Breast epithelium (tissue), 4 donors: ENCODE measurements at regions of chr9 and their contacts with region 1.

Region 1: GRCh38 chr9:75001719-75002422 is 26.2 kb downstream of the CARNMT1 start:
- DNase-seq: no peak
- H3K4me3 ChIP-seq: no peak overlapping the region
- H3K27ac ChIP-seq: no peak overlapping the region
- H3K4me1 ChIP-seq: no peaks in the 10 kb centered on the region
- H3K27me3 ChIP-seq: no peaks in the 10 kb centered on the region
- CTCF ChIP-seq: peak; percentile 70 to 90 (median 72)
- POLR2A ChIP-seq: no peak

Region 2: DNA sequence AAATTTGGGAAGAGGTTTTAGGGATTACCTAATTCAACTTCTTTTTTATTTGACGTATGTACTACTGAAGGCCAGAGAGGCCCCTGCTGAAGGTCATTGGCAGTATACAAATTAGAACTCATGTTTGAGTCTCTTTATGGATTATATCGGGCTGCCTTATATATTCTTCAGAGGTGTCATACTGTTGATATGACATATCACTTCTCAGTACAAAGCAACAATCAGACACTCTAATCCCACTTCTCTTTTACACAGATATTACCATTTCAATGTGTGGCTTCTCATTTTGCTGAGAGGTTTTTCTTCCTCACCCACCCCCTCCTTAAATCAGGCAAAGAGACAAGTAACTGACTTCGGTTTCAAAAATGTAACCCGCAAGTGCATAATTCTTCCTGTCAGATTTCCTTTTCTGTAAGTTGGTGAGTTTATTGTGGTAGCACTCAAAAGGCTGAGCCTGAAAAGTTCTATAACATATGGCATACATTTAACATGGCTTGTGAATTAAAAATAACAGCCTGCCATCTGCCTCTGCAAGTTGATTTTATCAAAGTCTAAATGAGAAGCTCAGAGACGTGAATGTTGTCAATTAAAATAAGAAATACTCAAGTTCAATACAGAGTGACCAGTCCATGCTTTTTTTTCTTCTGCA is 668.4 kb before region 1 on chr9:
- intact Hi-C with region 1: loop called (anchors 10 kb)
- DNase-seq: no peak
- H3K4me3 ChIP-seq: no peak overlapping the region
- H3K27ac ChIP-seq: no peak overlapping the region
- H3K4me1 ChIP-seq: no peaks in the 10 kb centered on the region
- H3K27me3 ChIP-seq: no peaks in the 10 kb centered on the region
- CTCF ChIP-seq: no peak
- POLR2A ChIP-seq: no peak

Region 3: DNA sequence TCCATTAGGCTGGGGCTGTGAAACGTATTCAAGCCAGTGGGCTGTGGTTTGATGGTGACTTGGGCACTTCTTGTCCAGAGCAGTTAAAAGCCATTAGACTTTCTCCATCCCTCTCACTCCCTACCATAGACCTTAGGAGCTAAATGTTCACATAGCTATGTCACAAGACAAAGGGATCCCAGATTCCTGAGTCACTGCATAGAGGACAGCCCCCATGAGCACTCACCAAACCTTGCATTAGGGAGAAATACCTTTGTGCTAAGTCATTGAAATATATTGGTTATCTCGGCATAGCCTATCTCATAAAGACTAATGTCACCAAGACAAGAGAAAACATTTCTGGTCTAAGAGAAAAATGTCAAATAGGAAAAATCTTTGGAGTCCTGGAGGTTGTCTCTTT is 218.5 kb before region 1 on chr9:
- intact Hi-C with region 1: loop called (anchors 5 kb)
- DNase-seq: no peak
- H3K4me3 ChIP-seq: no peak overlapping the region
- H3K27ac ChIP-seq: no peak overlapping the region
- H3K4me1 ChIP-seq: no peaks in the 10 kb centered on the region
- H3K27me3 ChIP-seq: no peaks in the 10 kb centered on the region
- CTCF ChIP-seq: no peak
- POLR2A ChIP-seq: no peak

Region 4: DNA sequence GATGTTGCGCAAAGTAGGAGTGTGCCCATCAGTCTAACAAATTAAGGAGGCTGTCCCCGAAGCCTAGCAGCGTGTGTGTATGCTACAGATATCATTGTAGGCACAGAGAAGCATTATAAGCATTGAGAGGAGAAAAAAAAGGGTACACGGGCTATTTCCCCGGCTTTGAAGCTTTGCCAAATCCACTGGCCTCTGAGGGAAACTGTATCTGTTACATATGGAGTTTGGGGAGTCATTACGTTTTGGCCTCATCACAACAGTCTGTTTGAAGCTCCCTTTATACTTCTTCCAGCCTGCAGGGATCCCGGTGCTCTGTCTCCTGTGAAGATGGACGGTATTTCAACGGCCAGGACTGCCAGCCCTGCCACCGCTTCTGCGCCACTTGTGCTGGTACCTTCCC is 1186.4 kb after region 1 on chr9:
- intact Hi-C with region 1: no loop called
- DNase-seq: no peak
- H3K4me3 ChIP-seq: no peak overlapping the region
- H3K27ac ChIP-seq: no peak overlapping the region
- H3K4me1 ChIP-seq: no peaks in the 10 kb centered on the region
- H3K27me3 ChIP-seq: no peaks in the 10 kb centered on the region
- CTCF ChIP-seq: no peak
- POLR2A ChIP-seq: no peak